GM10248 (cell line): ENCODE measurements at regions of chr3 and their contacts with region 1.

Region 1: GRCh38 chr3:50350527-50351322 is at the starts of genes CYB561D2 and NPRL2:
- DNase-seq: peak; percentile 97
- CTCF ChIP-seq: no peak

Region 2: GRCh38 chr3:50337191-50337841 is 13.4 kb before region 1 on chr3:
- CTCF ChIA-PET with region 1: interaction called, 55 read pairs
- POLR2A ChIA-PET with region 1: interaction called, 24 read pairs
- DNase-seq: peak; percentile 99
- CTCF ChIP-seq: no peak

Region 3: GRCh38 chr3:50364481-50365079 is 13.9 kb after region 1 on chr3:
- CTCF ChIA-PET with region 1: interaction called, 11 read pairs
- POLR2A ChIA-PET with region 1: interaction called, 3 read pairs
- DNase-seq: no peak
- CTCF ChIP-seq: no peak

Region 4: DNA sequence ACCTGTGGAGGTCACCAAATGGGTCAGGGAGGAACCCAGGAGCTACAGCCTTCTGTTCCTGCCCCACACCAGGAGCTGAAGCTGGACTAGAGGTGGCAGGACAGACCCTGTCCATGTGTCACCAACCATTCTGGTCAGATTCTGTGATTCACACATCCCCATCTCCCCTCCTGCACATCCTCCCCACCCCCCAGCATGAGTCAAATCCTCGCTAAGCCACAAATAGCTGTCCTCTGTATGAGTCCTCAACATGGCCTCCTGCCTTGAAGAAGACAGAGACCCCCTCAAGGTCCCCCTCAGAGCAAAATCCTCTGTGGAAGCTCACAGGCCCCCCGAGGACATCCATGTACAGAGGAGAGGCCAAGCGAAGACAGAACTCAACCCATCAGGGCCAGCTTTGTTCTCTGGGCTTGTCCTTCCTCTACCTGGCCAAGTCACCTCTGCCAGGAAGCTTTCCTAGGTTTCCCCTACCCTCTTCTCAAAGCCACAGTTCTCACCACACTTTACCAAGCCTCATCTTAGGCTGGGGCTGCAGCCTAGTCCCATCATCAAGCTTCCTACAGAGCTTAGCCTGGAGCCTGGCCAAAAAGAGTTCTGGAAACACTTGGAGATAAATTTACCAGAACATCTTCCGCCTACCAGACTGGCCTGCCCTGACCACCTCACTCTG is 135.6 kb after region 1 on chr3:
- CTCF ChIA-PET with region 1: no interaction called
- POLR2A ChIA-PET with region 1: no interaction called
- DNase-seq: no peak
- CTCF ChIP-seq: no peak

Region 5: GRCh38 chr3:50542177-50543034 is 191.7 kb after region 1 on chr3:
- CTCF ChIA-PET with region 1: interaction called, 70 read pairs
- POLR2A ChIA-PET with region 1: no interaction called
- DNase-seq: peak; percentile 85
- CTCF ChIP-seq: peak; percentile 82

Region 6: DNA sequence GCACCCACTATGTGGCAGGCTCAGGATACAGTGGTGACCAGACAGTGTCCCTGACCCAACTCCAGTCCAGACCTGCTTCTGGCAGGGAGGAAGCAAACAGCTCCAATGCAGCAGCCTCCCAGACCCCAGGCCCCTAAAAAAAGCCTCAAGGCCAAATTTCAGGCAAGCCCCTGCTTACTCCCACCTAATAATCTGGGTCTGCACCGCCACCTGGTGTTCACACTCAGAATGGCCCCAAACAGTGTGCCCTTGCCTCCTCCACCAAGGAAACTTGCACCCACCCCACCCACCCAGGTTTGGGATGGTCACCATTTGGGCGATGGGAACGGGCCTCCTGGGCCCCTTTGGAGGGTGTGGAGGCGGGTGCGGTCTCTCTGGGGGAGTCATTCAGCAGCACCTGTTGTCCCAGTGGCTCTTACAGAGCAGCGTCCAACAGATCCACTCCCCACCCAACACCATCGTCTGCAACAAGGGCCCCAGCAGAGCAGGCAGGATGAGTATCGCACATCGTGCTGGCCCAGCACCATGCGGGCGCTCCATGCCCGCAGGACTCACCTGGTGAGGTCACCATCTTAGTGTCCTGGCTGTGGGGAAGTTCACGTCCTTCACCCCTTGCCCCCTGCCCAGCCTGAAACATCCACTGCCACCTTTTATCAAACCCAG is 199.5 kb after region 1 on chr3:
- CTCF ChIA-PET with region 1: interaction called, 30 read pairs
- POLR2A ChIA-PET with region 1: no interaction called
- DNase-seq: peak; percentile 79
- CTCF ChIP-seq: peak; percentile 75